ENCODE measurements at regions of chr21 and their contacts with region 1.

Region 1: GRCh38 chr21:28884976-28885852 is 107.5 kb downstream of the LTN1 start:
- DNase-seq: peak; percentile 84 to 95 (median 92)
- ATAC-seq: peak; percentile 95
- H3K4me3 ChIP-seq: peak overlapping the region; percentile 71
- H3K4me3 Mint-ChIP-seq: peak overlapping the region; percentile 89 to 99 (median 94)
- H3K27ac ChIP-seq: peak overlapping the region; percentile 80
- H3K27ac Mint-ChIP-seq: peak overlapping the region; percentile 98 to 99 (median 99)
- H3K4me1 ChIP-seq: peaks cover 9 to 14% of the 10 kb centered on the region in 2 donors
- H3K4me1 Mint-ChIP-seq: peaks cover 8 to 25% (median 20%) of the 10 kb centered on the region in 7 donors
- H3K27me3 ChIP-seq: no peaks in the 10 kb centered on the region
- H3K27me3 Mint-ChIP-seq: peaks cover 0 to 29% (median 0%) of the 10 kb centered on the region in 5 donors

Region 2: GRCh38 chr21:28745131-28746016 is 139.8 kb before region 1 on chr21:
- CTCF ChIA-PET with region 1: interaction called, 3 read pairs
- POLR2A ChIA-PET with region 1: interaction called, 6 read pairs
- intact Hi-C with region 1: loop called (anchors 1 kb)
- DNase-seq: peak; percentile 31 to 69 (median 60)
- ATAC-seq: peak; percentile 91
- H3K4me3 ChIP-seq: peak overlapping the region; percentile 49
- H3K4me3 Mint-ChIP-seq: no peak overlapping the region
- H3K27ac ChIP-seq: no peak overlapping the region
- H3K27ac Mint-ChIP-seq: no peak overlapping the region
- H3K4me1 ChIP-seq: peaks cover 0 to 3% of the 10 kb centered on the region in 2 donors
- H3K4me1 Mint-ChIP-seq: no peaks in the 10 kb centered on the region
- H3K27me3 ChIP-seq: no peaks in the 10 kb centered on the region
- H3K27me3 Mint-ChIP-seq: peaks cover 0 to 5% (median 0%) of the 10 kb centered on the region in 5 donors

Region 3: GRCh38 chr21:28899744-28900143 is 14.5 kb after region 1 on chr21:
- CTCF ChIA-PET with region 1: no interaction called
- POLR2A ChIA-PET with region 1: interaction called, 12 read pairs
- intact Hi-C with region 1: no loop called
- DNase-seq: no peak
- ATAC-seq: peak; percentile 10
- H3K4me3 ChIP-seq: no peak overlapping the region
- H3K4me3 Mint-ChIP-seq: no peak overlapping the region
- H3K27ac ChIP-seq: no peak overlapping the region
- H3K27ac Mint-ChIP-seq: no peak overlapping the region
- H3K4me1 ChIP-seq: no peaks in the 10 kb centered on the region
- H3K4me1 Mint-ChIP-seq: no peaks in the 10 kb centered on the region
- H3K27me3 ChIP-seq: no peaks in the 10 kb centered on the region
- H3K27me3 Mint-ChIP-seq: peaks cover 3 to 32% (median 6%) of the 10 kb centered on the region in 5 donors

Region 4: DNA sequence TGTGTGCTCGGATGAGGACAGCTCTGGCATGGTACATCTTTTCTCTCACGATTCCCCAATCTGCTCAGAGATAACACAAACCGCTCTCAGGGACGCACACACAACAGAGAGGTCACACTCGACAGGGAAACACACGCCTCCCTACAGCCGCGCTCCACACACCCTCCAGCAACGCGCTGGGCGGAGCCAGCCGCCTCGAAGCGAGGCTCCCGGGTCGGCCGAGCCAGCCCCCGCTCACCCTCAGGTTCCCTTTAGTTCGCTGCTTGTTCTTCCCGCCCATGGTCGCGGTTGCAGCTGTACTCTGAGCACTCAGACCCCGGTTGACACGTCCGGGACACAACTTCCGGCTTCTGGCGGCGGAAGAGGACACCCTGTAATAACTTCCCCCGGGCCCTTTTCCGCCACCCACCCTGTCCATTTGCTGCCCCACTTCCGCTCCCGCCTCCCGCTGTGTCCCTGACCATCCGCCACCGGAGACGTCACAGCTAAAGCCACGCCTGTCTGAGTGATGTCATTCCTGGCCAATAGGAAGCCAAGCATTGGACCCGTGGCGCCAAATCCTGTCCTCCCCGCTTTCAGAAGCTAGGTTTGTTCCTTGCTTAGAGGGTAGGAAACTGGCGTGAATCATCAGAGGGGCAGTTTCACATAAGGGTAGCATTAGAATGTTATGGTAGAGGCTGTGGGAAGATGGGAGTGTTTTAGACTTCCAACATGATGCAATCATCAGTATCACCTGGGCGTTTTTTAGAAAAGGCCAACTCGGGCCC is 107.5 kb after region 1 on chr21 and contains the start of gene LTN1:
- CTCF ChIA-PET with region 1: no interaction called
- POLR2A ChIA-PET with region 1: interaction called, 10 read pairs
- intact Hi-C with region 1: loop called (anchors 1 kb)
- DNase-seq: peak; percentile 91 to 99 (median 98)
- ATAC-seq: peak; percentile 98
- H3K4me3 ChIP-seq: peak within 1 kb of the TSS; percentile 86
- H3K4me3 Mint-ChIP-seq: peak within 1 kb of the TSS; percentile 89 to 99 (median 94)
- H3K27ac ChIP-seq: peak within 1 kb of the TSS; percentile 87
- H3K27ac Mint-ChIP-seq: peak within 1 kb of the TSS; percentile 94 to 99 (median 98)
- H3K4me1 ChIP-seq: peaks cover 11 to 23% of the 10 kb centered on the region in 2 donors
- H3K4me1 Mint-ChIP-seq: peaks cover 26 to 58% (median 42%) of the 10 kb centered on the region in 7 donors
- H3K27me3 ChIP-seq: no peaks in the 10 kb centered on the region
- H3K27me3 Mint-ChIP-seq: no peaks in the 10 kb centered on the region
- total RNA-seq, gene LTN1: 27.3 to 36.3 (median 31.3) TPM

Region 5: DNA sequence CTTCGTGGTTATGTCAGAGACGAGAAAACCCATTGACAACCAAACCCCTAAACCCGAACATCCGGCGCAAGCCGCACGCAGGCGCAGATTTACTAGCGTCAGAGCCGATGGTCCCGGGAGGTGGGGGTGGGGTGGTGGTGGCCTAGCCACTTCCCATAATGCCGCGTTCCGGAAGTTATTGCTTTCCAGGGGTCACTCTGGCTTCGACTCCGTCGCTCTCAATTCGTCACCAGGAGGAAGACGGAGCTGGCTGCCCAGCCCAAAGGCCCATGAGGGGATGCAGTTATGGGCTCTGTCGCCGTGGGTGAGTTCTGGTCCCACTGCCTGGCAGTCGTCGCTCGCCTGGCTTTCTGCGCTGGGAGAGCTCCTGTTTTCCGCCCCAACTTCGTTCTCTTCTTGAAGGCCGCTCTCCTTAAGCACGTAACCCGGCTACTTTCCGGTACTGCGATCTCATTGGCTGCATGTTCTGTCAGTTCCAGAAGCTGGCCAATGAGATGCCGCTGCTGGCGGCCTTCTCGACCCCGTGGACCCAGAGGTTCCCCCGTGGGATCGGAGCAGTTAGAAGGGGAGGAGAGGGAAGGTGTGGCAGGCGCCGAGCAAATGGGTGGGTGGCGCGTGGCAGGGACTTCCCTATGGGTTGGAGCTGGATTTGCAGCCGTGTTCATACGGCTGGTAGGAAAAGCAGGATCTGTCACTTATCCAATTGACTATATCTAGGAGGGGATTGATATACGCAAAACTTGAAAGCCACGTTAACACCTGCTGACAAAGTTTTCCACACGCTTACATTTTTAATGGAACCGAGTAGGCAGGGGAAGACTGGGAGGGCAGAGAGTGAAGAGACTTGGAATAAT is 139.5 kb after region 1 on chr21 and contains the start of gene USP16:
- CTCF ChIA-PET with region 1: no interaction called
- POLR2A ChIA-PET with region 1: interaction called, 3 read pairs
- intact Hi-C with region 1: loop called (anchors 1 kb)
- DNase-seq: peak; percentile 86 to 97 (median 96)
- ATAC-seq: peak; percentile 94
- H3K4me3 ChIP-seq: peak within 1 kb of the TSS; percentile 88
- H3K4me3 Mint-ChIP-seq: peak within 1 kb of the TSS; percentile 88 to 99 (median 96)
- H3K27ac ChIP-seq: peak within 1 kb of the TSS; percentile 93
- H3K27ac Mint-ChIP-seq: peak within 1 kb of the TSS; percentile 97 to 100 (median 99)
- H3K4me1 ChIP-seq: peaks cover 35 to 41% of the 10 kb centered on the region in 2 donors
- H3K4me1 Mint-ChIP-seq: peaks cover 21 to 79% (median 53%) of the 10 kb centered on the region in 7 donors
- H3K27me3 ChIP-seq: no peaks in the 10 kb centered on the region
- H3K27me3 Mint-ChIP-seq: no peaks in the 10 kb centered on the region
- total RNA-seq, gene USP16: 40.9 to 84.3 (median 62.7) TPM

Region 6: DNA sequence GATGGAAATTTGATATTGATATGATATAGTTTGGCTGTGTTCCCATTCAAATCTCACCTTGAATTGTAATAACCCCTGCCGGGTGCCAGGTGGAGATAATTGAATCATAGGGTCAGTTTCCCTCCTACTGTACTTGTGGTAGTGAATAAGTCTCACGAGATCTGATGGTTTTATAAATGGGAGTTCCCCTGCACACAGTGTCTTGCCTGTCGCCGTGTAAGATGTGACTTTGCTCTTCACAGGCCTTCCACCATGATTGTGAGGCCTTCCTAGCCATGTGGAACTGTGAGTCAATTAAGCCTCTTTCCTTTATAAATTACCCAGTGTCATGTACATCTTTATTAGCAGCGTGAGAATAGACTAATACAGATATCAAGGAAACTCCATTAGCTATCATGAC is 319.8 kb after region 1 on chr21:
- CTCF ChIA-PET with region 1: no interaction called
- POLR2A ChIA-PET with region 1: no interaction called
- intact Hi-C with region 1: no loop called
- DNase-seq: no peak
- ATAC-seq: no peak
- H3K4me3 ChIP-seq: no peak overlapping the region
- H3K4me3 Mint-ChIP-seq: no peak overlapping the region
- H3K27ac ChIP-seq: no peak overlapping the region
- H3K27ac Mint-ChIP-seq: no peak overlapping the region
- H3K4me1 ChIP-seq: no peaks in the 10 kb centered on the region
- H3K4me1 Mint-ChIP-seq: peaks cover 0 to 13% (median 0%) of the 10 kb centered on the region in 7 donors
- H3K27me3 ChIP-seq: no peaks in the 10 kb centered on the region
- H3K27me3 Mint-ChIP-seq: peaks cover 0 to 4% (median 0%) of the 10 kb centered on the region in 5 donors